Esophagus muscularis mucosa (tissue), 4 donors: ENCODE measurements at regions of chr9 and their contacts with region 1.

Region 1: GRCh38 chr9:130235897-130236668 is 29.5 kb upstream of the HMCN2 start:
- DNase-seq: no peak
- H3K4me3 ChIP-seq: peak overlapping the region; percentile 18 to 40 (median 23)
- H3K27ac ChIP-seq: peak overlapping the region; percentile 76 to 84 (median 80)
- H3K4me1 ChIP-seq: peaks cover 11 to 46% (median 44%) of the 10 kb centered on the region in 4 donors
- H3K27me3 ChIP-seq: no peaks in the 10 kb centered on the region
- CTCF ChIP-seq: peak in 2 of 3 experiments; percentile 100
- EP300 ChIP-seq: peak; percentile 3
- POLR2A ChIP-seq: no peak

Region 2: DNA sequence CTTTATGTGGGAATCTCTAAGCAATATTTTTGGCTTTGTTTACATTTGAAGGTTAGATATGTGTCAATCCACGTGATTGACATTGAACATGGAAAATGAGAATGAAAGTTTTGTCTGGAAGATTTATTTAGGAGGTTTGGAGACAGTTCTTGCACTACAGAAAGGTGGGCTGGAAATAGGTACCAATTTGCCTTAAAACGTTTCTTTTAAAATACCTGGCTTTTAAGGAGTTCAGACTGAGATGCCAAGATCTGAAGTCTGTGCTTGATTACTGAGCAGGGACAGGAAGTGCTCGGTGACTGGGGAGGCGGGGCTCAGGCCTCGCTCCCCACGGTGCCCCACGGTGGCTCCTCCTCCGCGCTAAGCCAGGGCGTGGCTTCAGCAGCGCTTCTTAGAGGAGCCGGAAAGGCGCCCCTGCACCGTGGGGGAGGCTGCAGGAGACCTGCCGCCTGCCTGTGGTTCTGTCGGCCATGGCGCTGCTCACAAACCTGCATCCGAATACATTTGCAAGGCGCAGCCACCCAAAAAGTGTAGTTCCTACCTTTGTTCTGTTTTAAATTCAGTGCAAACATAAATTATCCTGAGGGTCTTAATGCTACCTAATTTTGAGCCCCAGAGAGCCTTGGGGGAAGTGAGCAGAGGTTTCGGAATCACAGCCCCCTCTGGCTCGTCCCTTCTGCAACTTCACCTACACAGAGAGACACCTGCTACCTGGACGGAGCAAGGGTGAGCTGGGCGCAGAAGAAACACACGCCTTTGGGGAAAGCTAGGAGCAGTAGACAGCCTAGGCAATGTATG is 351.7 kb before region 1 on chr9:
- intact Hi-C with region 1: loop called (anchors 5 kb)
- DNase-seq: no peak
- H3K4me3 ChIP-seq: peak overlapping the region; percentile 33 to 54 (median 41)
- H3K27ac ChIP-seq: peak overlapping the region; percentile 86 to 88 (median 86)
- H3K4me1 ChIP-seq: peaks cover 29 to 86% (median 81%) of the 10 kb centered on the region in 4 donors
- H3K27me3 ChIP-seq: no peaks in the 10 kb centered on the region
- CTCF ChIP-seq: peak in 1 of 3 experiments; percentile 15
- EP300 ChIP-seq: no peak
- POLR2A ChIP-seq: no peak

Region 3: DNA sequence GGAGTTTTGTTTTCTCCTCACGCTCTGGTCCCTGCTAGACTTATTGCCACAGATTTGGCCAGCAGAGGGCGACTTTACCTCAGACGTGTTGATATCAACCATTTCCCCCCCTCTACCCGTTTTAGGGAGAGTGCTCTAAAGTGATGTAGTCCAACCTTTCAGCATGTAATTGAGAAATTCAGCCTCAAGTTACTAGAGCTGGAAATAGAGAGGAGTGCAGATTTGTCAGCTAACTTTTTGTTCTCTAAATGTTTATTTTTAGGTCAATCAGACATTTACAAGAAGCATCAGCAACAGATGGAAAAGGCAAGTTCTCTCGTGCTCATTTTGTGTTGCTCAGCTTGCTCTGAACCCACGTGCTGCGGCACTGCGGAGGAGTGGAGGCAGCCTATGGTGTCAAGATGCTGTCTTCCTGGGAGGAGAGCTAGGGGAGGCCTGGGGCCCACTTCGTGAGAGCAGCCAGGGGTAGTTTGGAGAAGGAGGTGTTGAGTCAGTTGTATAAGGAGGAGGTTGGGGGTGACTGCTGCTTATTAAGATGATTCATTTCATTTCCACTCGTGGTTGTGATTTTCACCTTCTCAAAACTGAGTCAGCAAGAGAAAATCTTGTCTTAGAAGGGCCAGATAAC is 128.7 kb before region 1 on chr9:
- intact Hi-C with region 1: loop called (anchors 2 kb)
- DNase-seq: peak; percentile 95
- H3K4me3 ChIP-seq: no peak overlapping the region
- H3K27ac ChIP-seq: peak overlapping the region; percentile 64 to 79 (median 70)
- H3K4me1 ChIP-seq: peaks cover 0 to 34% (median 18%) of the 10 kb centered on the region in 4 donors
- H3K27me3 ChIP-seq: no peaks in the 10 kb centered on the region
- CTCF ChIP-seq: peak; percentile 80 to 86 (median 84)
- EP300 ChIP-seq: no peak
- POLR2A ChIP-seq: no peak

Region 4: DNA sequence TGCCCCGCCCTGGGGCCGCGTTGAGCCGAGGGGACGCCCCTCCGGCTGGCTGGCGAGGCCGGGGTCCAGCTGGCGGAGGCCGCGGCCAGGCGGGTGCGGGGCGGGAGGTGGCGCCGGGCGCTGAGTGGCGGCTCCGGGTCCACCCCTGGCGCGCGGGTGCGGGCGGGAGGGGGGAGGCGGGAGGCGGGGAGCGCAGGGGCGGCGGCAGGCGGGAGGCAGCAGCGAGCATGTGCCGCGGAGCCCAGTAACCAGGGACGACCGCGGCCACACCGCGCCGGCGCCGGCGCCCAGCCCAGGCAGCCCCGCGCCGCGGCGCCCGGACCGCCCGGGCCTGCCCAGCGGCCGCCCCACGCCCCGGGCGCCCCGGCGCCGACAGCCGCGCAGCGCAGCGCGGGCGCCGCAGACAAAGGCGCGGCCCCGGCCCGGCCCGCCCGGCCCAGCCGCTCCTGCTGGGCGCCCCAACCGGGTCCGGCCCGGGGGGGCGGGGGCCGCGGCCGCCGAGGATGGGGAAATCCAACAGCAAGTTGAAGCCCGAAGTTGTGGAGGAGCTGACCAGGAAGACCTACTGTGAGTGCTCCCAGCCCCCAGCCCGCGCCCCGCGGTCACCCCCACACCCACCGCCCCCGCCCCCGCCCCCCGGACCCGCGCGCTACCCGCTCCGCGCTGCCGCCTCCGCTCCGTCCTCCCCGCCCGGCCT is 63.8 kb before region 1 on chr9 and contains the start of gene NCS1:
- intact Hi-C with region 1: loop called (anchors 5 kb)
- DNase-seq: no peak
- H3K4me3 ChIP-seq: peak within 1 kb of the TSS; percentile 72 to 91 (median 76)
- H3K27ac ChIP-seq: peak within 1 kb of the TSS; percentile 91 to 97 (median 96)
- H3K4me1 ChIP-seq: peaks cover 9 to 55% (median 50%) of the 10 kb centered on the region in 4 donors
- H3K27me3 ChIP-seq: peaks cover 0 to 5% (median 0%) of the 10 kb centered on the region in 4 donors
- CTCF ChIP-seq: no peak
- EP300 ChIP-seq: no peak
- POLR2A ChIP-seq: no peak
- total RNA-seq, gene NCS1: 100 to 206 (median 122) TPM

Region 5: DNA sequence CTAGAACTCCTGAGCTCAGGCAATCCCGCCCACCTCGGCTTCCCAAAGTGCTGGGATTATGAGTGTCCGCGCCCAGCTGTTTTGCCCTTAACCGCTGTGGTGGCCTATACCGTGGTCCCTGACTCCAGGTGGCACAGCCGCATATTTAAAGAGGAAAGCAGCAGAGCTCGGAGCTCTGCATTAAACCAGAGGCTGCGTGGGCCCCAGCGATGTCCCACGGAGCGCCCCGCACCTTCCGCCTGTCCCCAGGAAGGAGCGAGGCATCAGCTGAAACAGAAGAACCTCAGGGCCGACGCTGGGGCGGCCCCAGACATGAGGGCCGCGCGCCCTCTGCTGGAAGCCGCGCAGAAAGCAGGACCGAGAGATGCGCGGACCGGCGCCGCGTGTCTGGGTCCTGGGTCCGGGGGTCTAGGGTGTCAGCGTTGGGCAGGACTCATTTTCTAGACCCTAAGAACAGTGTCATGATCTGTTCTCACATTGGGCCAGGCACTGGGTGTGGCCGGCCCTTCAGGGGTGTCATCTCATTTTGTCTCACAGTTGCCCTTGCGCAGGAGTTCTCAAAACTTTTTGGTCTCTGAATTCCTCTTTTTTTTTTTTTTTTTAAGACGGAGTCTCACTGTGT is 810.6 kb after region 1 on chr9:
- intact Hi-C with region 1: no loop called
- DNase-seq: no peak
- H3K4me3 ChIP-seq: peak overlapping the region in 2 of 4 donors; percentile 14 to 20
- H3K27ac ChIP-seq: no peak overlapping the region
- H3K4me1 ChIP-seq: peaks cover 0 to 8% (median 6%) of the 10 kb centered on the region in 4 donors
- H3K27me3 ChIP-seq: peaks cover 0 to 10% (median 0%) of the 10 kb centered on the region in 4 donors
- CTCF ChIP-seq: peak; percentile 86 to 95 (median 92)
- EP300 ChIP-seq: no peak
- POLR2A ChIP-seq: no peak